ENCODE measurements at regions of chr3 and their contacts with region 1.

Region 1: GRCh38 chr3:9396700-9397521 is 504 bp upstream of the SETD5 start:
- DNase-seq: peak; percentile 97 to 99 (median 98)
- ATAC-seq: peak; percentile 84
- H3K4me3 ChIP-seq: peak overlapping the region; percentile 53 to 85
- H3K27ac ChIP-seq: peak overlapping the region; percentile 95 to 98
- H3K4me1 ChIP-seq: peaks cover 44 to 75% of the 10 kb centered on the region in 2 donors
- H3K27me3 ChIP-seq: no peaks in the 10 kb centered on the region
- CTCF ChIP-seq: no peak

Region 2: DNA sequence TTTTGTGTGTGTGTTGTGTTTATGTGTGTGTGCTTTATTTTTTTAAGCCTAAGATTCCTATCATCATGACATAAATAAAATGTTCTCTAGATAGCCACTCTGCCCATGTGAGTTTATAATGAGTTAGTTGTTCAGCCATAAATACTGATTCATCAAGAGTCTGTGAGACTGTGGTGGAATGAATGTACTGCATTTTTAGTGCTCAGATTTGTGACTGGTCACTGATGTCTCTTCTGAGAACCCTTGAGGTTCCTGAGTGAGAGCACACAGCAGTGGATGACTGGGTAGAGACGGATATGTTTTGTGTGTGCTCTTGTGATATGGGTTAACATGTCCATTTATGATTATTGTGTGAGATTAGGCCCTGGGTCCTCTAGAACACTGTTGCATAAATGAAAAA is 51.7 kb after region 1 on chr3:
- intact Hi-C with region 1: loop called in 1 of 2 experiments (anchors 10 kb)
- DNase-seq: no peak
- ATAC-seq: no peak
- H3K4me3 ChIP-seq: no peak overlapping the region
- H3K27ac ChIP-seq: no peak overlapping the region
- H3K4me1 ChIP-seq: peaks cover 0 to 10% of the 10 kb centered on the region in 2 donors
- H3K27me3 ChIP-seq: no peaks in the 10 kb centered on the region
- CTCF ChIP-seq: no peak

Measured in left lung (tissue), 14 donors.